CD4-positive, alpha-beta T cell (primary cell): ENCODE measurements at regions of chr5 and their contacts with region 1.

Region 1: DNA sequence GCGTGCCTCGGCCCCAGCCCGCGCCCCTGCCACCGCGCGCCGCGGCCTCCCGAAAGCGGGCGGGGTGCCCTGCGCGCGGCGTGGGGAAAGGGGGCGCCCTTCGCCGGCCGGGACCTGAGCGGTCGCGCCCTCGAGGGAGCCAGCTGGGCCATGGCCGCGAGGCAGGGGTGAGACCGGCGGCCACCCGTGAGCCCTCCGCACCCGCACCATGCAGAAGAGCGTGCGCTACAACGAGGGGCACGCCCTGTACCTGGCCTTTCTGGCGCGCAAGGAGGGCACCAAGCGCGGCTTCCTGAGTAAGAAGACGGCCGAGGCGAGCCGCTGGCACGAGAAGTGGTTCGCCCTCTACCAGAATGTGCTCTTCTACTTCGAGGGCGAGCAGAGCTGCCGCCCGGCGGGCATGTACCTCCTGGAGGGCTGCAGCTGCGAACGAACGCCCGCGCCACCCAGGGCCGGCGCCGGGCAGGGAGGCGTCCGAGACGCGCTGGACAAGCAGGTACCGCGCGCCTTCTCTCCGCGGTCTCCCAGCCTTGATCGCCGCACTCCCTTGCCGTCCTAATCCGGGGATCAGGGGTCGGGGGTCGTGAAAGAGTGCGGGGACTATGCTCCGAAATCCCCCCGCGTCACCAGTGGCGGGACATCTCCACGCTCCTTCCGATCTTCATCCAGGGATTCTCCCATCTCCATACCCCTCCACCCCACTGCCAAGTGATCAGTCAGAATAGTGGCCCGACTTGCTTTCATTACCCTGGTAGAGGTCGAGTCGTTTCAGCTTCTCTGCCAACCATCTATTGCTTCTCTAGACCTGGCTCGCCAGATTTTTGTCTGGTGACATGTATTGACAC is 590 bp downstream of the RASGRF2 start:
- DNase-seq: peak; percentile 27 to 79 (median 46)
- ATAC-seq: peak; percentile 25
- H3K4me3 ChIP-seq: peak overlapping the region; percentile 84
- H3K4me3 Mint-ChIP-seq: peak overlapping the region; percentile 93
- H3K27ac ChIP-seq: peak overlapping the region in 1 of 2 donors; percentile 43
- H3K27ac Mint-ChIP-seq: peak overlapping the region; percentile 88
- H3K4me1 ChIP-seq: peaks cover 31% of the 10 kb centered on the region
- H3K4me1 Mint-ChIP-seq: peaks cover 77% of the 10 kb centered on the region
- H3K27me3 ChIP-seq: no peaks in the 10 kb centered on the region
- H3K27me3 Mint-ChIP-seq: no peaks in the 10 kb centered on the region
- CTCF ChIP-seq: no peak

Region 2: DNA sequence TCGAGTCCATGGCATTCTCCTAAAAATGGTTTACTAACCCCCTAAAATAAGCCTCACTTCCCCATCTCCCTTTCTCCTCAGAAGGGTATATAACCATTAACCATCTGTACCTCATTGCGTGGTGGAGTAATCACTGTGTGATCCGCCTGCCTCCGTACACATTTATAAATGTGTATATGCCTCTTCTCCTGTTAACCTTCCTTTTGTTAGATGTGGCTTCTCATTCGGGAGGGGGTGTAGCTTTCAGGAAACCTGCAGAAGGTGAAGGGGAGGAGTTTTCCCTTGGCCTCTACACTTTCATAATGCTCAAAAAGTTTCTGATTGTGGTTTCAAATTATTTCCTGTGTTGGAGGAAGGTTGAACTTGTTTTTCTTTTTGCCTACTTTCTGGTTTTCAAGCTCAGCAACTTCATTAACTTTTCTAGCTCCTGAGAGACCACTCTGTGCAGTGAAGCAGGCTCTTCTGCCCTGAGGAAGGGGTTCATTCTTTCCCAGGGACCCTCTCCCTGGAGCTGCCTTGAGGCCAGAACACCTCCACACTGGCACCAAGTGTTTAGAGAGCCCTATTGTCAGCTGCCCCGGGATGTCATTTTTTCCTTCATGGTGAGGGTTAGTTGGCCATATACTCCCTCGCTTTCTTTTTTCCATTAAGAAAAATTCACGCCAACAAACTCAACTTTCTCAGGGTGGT is 46.3 kb after region 1 on chr5:
- CTCF ChIA-PET with region 1: interaction called, 15 read pairs
- POLR2A ChIA-PET with region 1: interaction called, 82 read pairs
- intact Hi-C with region 1: loop called (anchors 1 to 2 kb)
- DNase-seq: peak in 13 of 14 experiments; percentile 15 to 91 (median 57)
- ATAC-seq: peak; percentile 89
- H3K4me3 ChIP-seq: peak overlapping the region; percentile 50
- H3K4me3 Mint-ChIP-seq: peak overlapping the region; percentile 87
- H3K27ac ChIP-seq: peak overlapping the region; percentile 78 to 91
- H3K27ac Mint-ChIP-seq: peak overlapping the region; percentile 92
- H3K4me1 ChIP-seq: peaks cover 60% of the 10 kb centered on the region
- H3K4me1 Mint-ChIP-seq: peaks cover 86% of the 10 kb centered on the region
- H3K27me3 ChIP-seq: no peaks in the 10 kb centered on the region
- H3K27me3 Mint-ChIP-seq: no peaks in the 10 kb centered on the region
- CTCF ChIP-seq: no peak

Region 3: DNA sequence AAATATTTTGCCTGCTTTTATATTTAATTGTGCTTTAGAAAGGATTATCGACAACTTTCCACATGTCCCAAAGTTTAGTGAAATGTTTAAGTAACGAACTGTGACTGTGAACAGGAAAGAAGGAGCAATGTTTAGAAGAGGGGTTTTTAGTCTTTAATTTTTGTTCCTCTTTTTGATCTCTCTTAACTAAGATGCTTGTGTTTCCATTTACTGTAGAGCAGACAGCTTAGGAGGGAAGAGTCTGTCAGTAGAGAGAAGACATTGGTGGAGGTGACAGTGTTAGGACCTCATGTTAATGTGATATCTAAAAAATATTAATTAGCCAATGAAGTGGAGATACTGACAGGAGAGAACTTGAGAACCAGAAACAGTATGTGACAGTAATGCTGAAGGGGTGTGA is 91.6 kb after region 1 on chr5:
- CTCF ChIA-PET with region 1: no interaction called
- POLR2A ChIA-PET with region 1: no interaction called
- intact Hi-C with region 1: loop called in 1 of 2 experiments (anchors 5 kb)
- DNase-seq: no peak
- ATAC-seq: no peak
- H3K4me3 ChIP-seq: no peak overlapping the region
- H3K4me3 Mint-ChIP-seq: no peak overlapping the region
- H3K27ac ChIP-seq: no peak overlapping the region
- H3K27ac Mint-ChIP-seq: no peak overlapping the region
- H3K4me1 ChIP-seq: no peaks in the 10 kb centered on the region
- H3K4me1 Mint-ChIP-seq: peaks cover 68% of the 10 kb centered on the region
- H3K27me3 ChIP-seq: no peaks in the 10 kb centered on the region
- H3K27me3 Mint-ChIP-seq: no peaks in the 10 kb centered on the region
- CTCF ChIP-seq: no peak

Region 4: DNA sequence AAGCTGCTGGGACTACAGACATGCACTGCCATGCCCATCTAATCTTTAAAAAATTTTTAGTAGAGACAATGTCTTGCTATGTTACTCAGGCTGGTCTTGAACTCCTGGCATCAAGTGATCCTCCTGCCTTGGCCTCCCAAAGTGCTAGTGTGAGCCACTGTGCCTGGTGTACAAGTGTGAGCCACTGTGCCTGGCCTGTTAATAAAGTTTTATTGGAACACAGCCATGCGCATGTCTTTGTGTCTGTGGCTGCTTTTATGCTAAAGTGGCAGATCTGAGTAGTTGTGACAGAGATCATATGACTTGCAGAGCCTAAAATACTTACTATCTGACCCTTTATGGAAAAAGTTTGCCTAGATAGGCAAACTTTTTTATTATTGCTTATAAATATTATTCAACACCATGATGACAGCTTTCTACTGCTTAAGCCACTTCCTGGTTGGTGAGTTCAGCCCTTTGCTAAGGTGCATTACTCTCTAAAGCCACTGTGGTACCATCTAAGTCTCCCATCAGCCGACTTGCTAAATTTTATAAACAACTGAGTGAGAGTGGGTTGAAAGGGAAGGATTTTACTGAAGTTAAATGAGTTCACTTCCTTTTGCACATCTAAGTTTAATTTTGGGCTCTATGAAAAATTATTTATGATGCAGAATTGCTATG is 132.9 kb after region 1 on chr5:
- CTCF ChIA-PET with region 1: interaction called, 4 read pairs
- POLR2A ChIA-PET with region 1: interaction called, 3 read pairs
- intact Hi-C with region 1: loop called (anchors 5 kb)
- DNase-seq: no peak
- ATAC-seq: no peak
- H3K4me3 ChIP-seq: no peak overlapping the region
- H3K4me3 Mint-ChIP-seq: no peak overlapping the region
- H3K27ac ChIP-seq: no peak overlapping the region
- H3K27ac Mint-ChIP-seq: no peak overlapping the region
- H3K4me1 ChIP-seq: no peaks in the 10 kb centered on the region
- H3K4me1 Mint-ChIP-seq: peaks cover 9% of the 10 kb centered on the region
- H3K27me3 ChIP-seq: no peaks in the 10 kb centered on the region
- H3K27me3 Mint-ChIP-seq: no peaks in the 10 kb centered on the region
- CTCF ChIP-seq: no peak

Region 5: DNA sequence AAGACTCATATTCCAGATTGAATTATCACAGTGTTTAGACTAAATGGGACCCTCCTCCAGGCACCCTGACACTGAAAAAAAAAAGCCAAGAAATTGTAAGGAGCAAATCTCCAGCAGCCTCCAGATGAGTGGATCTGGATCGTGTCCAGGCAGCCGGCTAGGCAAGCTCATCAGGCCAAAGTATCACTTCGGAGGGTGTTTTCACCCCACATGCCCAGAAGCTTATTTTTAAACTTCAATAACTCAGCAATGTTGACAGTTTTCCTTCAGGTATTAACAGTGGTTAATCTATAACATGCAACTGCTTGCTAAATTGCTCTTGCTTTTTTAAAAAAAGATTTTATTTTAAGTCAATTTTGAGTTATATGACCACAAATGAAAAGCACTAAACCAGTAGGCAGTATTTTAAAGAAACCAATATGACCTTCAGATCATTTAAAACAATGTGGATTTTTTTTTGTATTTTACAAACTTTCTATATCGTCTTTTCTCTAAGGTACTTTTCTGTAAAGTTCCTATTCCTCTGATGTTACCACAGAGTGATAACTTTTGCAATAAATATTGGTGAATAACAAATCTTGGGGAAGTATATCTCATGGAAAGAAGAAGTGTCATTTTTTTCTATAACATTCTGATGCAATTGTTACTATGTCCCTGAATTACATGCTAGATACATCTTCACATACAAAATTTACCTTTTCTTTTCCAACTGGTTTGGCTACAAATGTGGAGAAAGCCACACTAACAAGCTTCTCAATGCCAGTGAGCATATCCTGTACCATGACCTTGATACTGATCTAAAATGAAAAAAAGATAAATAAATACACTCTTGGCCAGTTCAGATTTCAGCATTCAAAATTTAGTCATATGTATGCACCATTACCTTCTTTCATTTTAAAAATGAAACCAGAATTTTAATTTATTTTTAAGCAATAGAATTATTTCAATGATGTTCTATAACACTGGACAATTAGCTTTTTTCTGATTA is 402.6 kb after region 1 on chr5:
- CTCF ChIA-PET with region 1: no interaction called
- POLR2A ChIA-PET with region 1: no interaction called
- intact Hi-C with region 1: no loop called
- DNase-seq: no peak
- ATAC-seq: no peak
- H3K4me3 ChIP-seq: no peak overlapping the region
- H3K4me3 Mint-ChIP-seq: no peak overlapping the region
- H3K27ac ChIP-seq: no peak overlapping the region
- H3K27ac Mint-ChIP-seq: no peak overlapping the region
- H3K4me1 ChIP-seq: no peaks in the 10 kb centered on the region
- H3K4me1 Mint-ChIP-seq: no peaks in the 10 kb centered on the region
- H3K27me3 ChIP-seq: peaks cover 0 to 3% of the 10 kb centered on the region in 2 experiments
- H3K27me3 Mint-ChIP-seq: no peaks in the 10 kb centered on the region
- CTCF ChIP-seq: no peak